Activated B cell treated with CpG ODN at 0.5 μM for 24 hours (primary cell): ENCODE measurements at regions of chr14 and their contacts with region 1.

Region 1: DNA sequence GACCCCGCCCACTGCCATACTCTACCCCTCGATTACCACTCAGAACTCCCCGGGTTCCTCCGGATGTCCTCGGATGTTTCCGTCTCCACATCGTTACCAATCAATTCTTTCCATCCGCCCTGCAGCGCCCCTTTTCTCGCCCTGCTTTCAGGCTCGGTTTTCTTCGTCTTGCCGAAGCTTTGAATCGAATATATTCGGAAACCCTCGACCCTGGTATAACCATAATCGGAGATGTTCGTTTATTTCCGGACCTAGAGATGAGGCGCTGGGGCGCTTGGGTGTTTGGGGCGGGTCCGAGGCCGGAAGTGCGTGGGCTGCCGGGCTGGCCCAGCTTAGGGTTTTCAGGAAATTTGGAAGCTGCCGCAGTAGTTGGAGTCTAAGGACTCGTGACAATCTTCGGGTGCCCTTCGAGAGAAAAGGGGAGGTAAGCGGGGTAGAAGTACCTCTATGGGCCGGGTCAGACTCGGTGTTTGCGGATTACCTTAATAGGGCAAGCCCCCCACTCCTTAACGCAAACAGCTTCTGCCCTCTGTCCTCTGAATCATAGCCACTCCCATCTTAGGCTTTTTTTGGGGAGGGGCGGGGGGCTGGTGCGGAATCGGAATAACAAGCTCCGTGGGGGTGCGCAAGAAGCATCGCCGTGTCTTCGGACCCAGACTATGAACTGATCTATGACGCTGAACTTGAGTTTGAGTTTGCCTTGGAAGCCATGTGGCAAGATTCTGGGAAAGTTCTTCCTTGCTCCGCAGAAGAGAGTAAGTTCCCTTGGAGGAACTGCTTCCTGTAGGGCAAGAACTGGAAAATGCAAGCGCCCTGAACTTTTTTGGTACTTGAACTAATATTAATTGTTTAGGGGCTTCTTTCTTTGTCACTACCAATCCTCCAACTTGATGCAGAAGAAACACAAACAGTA is at the start of gene C14orf119:
- DNase-seq: peak; percentile 77
- ATAC-seq: peak; percentile 87
- H3K4me3 Mint-ChIP-seq: no peak within 1 kb of the TSS
- H3K27ac Mint-ChIP-seq: no peak within 1 kb of the TSS
- H3K4me1 Mint-ChIP-seq: peaks cover 34% of the 10 kb centered on the region
- H3K27me3 Mint-ChIP-seq: no peaks in the 10 kb centered on the region
- CTCF ChIP-seq: no peak
- total RNA-seq, gene C14orf119: 35.3 and 36.0 TPM in 2 replicates

Region 2: DNA sequence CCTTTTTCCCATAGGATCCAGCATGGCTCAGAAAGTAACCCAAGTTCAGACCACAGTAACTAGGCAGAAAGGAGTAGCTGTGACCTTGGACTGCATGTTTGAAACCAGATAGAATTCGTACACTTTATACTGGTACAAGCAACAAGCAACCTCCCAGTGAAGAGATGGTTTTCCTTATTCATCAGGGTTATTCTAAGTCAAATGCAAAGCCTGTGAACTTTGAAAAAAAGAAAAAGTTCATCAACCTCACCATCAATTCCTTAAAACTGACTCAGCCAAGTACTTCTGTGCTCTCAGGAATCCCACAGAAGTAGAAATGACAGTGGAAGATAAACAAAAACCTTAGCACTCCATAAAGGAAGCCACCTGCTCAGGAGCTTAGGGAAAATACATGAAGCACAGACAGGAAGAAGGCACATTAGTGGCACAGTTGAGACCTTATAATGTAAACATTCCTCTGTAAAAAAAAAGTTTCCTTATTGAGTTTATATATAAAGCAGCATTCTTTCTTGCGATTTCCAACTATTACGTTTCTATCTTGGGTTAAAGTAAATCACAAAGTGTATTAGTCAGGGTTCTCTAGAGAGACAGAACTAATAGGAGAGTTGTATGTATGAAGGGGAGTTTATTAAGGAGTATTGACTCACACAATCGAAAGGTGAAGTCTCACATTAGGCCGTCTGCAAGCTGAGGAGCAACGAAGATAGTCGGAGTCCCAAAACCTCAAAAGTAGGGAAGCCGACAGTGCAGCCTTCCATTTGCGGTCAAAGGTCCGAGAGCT is 904.9 kb before region 1 on chr14:
- CTCF ChIA-PET with region 1: no interaction called
- POLR2A ChIA-PET with region 1: no interaction called
- intact Hi-C with region 1: no loop called
- DNase-seq: no peak
- ATAC-seq: no peak
- H3K4me3 Mint-ChIP-seq: no peak overlapping the region
- H3K27ac Mint-ChIP-seq: no peak overlapping the region
- H3K4me1 Mint-ChIP-seq: no peaks in the 10 kb centered on the region
- H3K27me3 Mint-ChIP-seq: peaks cover 13% of the 10 kb centered on the region
- CTCF ChIP-seq: no peak

Region 3: GRCh38 chr14:22929104-22929847 is 166.2 kb before region 1 on chr14 and contains the start of gene PRMT5:
- CTCF ChIA-PET with region 1: interaction called, 5 read pairs
- POLR2A ChIA-PET with region 1: interaction called, 9 read pairs
- intact Hi-C with region 1: loop called (anchors 1 kb)
- DNase-seq: peak; percentile 83
- ATAC-seq: peak; percentile 93
- H3K4me3 Mint-ChIP-seq: no peak within 1 kb of the TSS
- H3K27ac Mint-ChIP-seq: no peak within 1 kb of the TSS
- H3K4me1 Mint-ChIP-seq: peaks cover 14% of the 10 kb centered on the region
- H3K27me3 Mint-ChIP-seq: no peaks in the 10 kb centered on the region
- CTCF ChIP-seq: no peak
- total RNA-seq, gene PRMT5: 75.3 and 96.5 TPM in 2 replicates

Region 4: GRCh38 chr14:23068476-23069412 is 26.7 kb before region 1 on chr14:
- CTCF ChIA-PET with region 1: interaction called, 19 read pairs
- POLR2A ChIA-PET with region 1: interaction called, 36 read pairs
- intact Hi-C with region 1: loop called (anchors 1 kb)
- DNase-seq: no peak
- ATAC-seq: peak; percentile 85
- H3K4me3 Mint-ChIP-seq: peak overlapping the region; percentile 22
- H3K27ac Mint-ChIP-seq: peak overlapping the region; percentile 50
- H3K4me1 Mint-ChIP-seq: peaks cover 36% of the 10 kb centered on the region
- H3K27me3 Mint-ChIP-seq: no peaks in the 10 kb centered on the region
- CTCF ChIP-seq: peak; percentile 79

Region 5: GRCh38 chr14:23186913-23187654 is 91.6 kb after region 1 on chr14:
- CTCF ChIA-PET with region 1: interaction called, 11 read pairs
- POLR2A ChIA-PET with region 1: interaction called, 7 read pairs
- intact Hi-C with region 1: no loop called
- DNase-seq: no peak
- ATAC-seq: peak; percentile 45
- H3K4me3 Mint-ChIP-seq: no peak overlapping the region
- H3K27ac Mint-ChIP-seq: no peak overlapping the region
- H3K4me1 Mint-ChIP-seq: no peaks in the 10 kb centered on the region
- H3K27me3 Mint-ChIP-seq: peaks cover 2% of the 10 kb centered on the region
- CTCF ChIP-seq: no peak

Region 6: DNA sequence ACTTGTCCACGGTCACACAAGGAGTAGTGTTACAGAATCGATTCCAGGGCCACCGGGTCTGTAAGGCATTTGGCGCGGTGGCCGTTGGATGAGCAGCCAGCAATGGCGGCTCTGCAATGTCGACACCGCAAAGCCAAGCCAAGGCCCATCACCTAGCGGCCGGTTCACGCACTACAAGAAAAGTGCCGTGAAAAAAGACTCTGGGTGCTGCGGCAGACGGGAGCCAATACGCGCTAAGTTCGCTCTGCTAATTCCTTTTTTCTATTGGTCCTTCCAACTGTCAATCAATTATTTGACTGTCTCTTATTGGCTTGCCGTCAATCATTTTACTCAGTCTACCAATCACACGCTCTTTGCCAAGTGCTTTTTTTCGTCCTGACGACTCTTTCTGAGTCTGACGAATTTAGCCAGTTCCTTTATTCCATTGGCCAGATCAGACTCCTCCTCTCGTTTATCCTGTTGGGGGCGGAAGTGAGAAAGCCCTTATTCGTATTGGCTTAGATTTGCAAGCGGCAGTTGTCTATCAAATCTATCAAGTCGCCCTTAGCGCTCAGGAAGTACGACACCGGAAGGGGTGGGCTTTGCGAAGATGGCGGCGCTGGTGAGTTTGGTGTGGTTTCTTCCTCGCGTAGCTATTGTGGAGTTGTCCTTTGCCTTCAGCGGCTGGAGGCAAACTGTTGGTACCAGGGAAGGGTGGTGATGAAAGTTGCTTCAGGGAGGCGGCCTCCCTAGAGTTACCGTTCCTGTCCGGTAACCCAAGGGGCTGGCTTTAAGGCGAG is 373.9 kb after region 1 on chr14 and contains the start of gene NGDN:
- CTCF ChIA-PET with region 1: no interaction called
- POLR2A ChIA-PET with region 1: interaction called, 4 read pairs
- intact Hi-C with region 1: loop called (anchors 1 kb)
- DNase-seq: peak; percentile 80
- ATAC-seq: peak; percentile 90
- H3K4me3 Mint-ChIP-seq: no peak within 1 kb of the TSS
- H3K27ac Mint-ChIP-seq: no peak within 1 kb of the TSS
- H3K4me1 Mint-ChIP-seq: peaks cover 11% of the 10 kb centered on the region
- H3K27me3 Mint-ChIP-seq: no peaks in the 10 kb centered on the region
- CTCF ChIP-seq: no peak
- total RNA-seq, gene NGDN: 60.5 and 67.4 TPM in 2 replicates